ENCODE measurements at regions of chr1 and their contacts with region 1.

Region 1: GRCh38 chr1:89719502-89720306 is 86.8 kb downstream of the LRRC8C start:
- DNase-seq: no peak
- ATAC-seq: peak; percentile 83
- H3K4me3 Mint-ChIP-seq: peak overlapping the region; percentile 63
- H3K27ac Mint-ChIP-seq: peak overlapping the region; percentile 100
- H3K4me1 Mint-ChIP-seq: peaks cover 89% of the 10 kb centered on the region
- H3K27me3 Mint-ChIP-seq: no peaks in the 10 kb centered on the region

Region 2: DNA sequence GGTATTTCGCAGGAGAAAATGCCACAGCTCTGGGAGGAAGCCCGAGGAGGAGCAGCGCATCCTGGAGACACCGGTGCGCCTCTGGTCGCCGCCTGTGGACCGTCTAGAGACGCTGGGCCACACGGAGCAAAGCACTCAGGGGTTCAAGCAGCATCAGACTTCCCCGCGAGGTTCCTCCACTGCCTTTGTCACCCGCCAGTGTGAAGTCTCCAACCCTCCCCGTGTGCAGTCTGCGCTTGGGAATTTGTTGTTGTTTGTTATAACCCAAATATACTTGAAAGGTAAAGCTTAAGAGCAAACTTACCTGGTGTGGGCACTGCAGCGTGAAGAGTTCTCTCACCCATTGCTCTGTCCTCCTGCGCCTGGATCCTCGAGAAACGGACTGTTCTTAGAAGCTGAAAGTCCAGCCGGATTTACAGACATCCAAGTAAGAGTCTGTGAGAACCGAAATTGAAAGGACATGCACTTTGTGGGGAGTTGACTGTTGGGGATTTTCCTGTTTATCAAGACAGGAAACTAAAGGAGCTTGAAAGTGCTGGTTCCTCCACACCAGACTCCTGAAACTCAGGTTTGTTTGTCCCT is 521.1 kb before region 1 on chr1 and contains the start of gene GBP4:
- CTCF ChIA-PET with region 1: no interaction called
- POLR2A ChIA-PET with region 1: no interaction called
- intact Hi-C with region 1: loop called in 1 of 2 experiments (anchors 5 kb)
- DNase-seq: peak; percentile 63
- ATAC-seq: peak; percentile 67
- H3K4me3 Mint-ChIP-seq: peak within 1 kb of the TSS; percentile 83
- H3K27ac Mint-ChIP-seq: peak within 1 kb of the TSS; percentile 98
- H3K4me1 Mint-ChIP-seq: peaks cover 73% of the 10 kb centered on the region
- H3K27me3 Mint-ChIP-seq: no peaks in the 10 kb centered on the region
- total RNA-seq, gene GBP4: 30.8 to 34.4 TPM

Region 3: GRCh38 chr1:89605692-89606091 is 114.0 kb before region 1 on chr1:
- CTCF ChIA-PET with region 1: interaction called, 10 read pairs
- POLR2A ChIA-PET with region 1: interaction called, 22 read pairs
- intact Hi-C with region 1: loop called (anchors 1 kb)
- DNase-seq: no peak
- ATAC-seq: no peak
- H3K4me3 Mint-ChIP-seq: peak overlapping the region; percentile 62
- H3K27ac Mint-ChIP-seq: peak overlapping the region; percentile 99
- H3K4me1 Mint-ChIP-seq: peaks cover 92% of the 10 kb centered on the region
- H3K27me3 Mint-ChIP-seq: no peaks in the 10 kb centered on the region

Region 4: GRCh38 chr1:89657886-89658285 is 61.8 kb before region 1 on chr1:
- CTCF ChIA-PET with region 1: interaction called, 5 read pairs
- POLR2A ChIA-PET with region 1: no interaction called
- intact Hi-C with region 1: loop called (anchors 2 to 5 kb)
- DNase-seq: no peak
- ATAC-seq: peak; percentile 56
- H3K4me3 Mint-ChIP-seq: no peak overlapping the region
- H3K27ac Mint-ChIP-seq: peak overlapping the region; percentile 88
- H3K4me1 Mint-ChIP-seq: peaks cover 94% of the 10 kb centered on the region
- H3K27me3 Mint-ChIP-seq: no peaks in the 10 kb centered on the region

Region 5: GRCh38 chr1:89698624-89699023 is 21.1 kb before region 1 on chr1:
- CTCF ChIA-PET with region 1: interaction called, 19 read pairs
- POLR2A ChIA-PET with region 1: no interaction called
- intact Hi-C with region 1: loop called in 1 of 2 experiments (anchors 2 kb)
- DNase-seq: no peak
- ATAC-seq: no peak
- H3K4me3 Mint-ChIP-seq: peak overlapping the region; percentile 17
- H3K27ac Mint-ChIP-seq: peak overlapping the region; percentile 94
- H3K4me1 Mint-ChIP-seq: peaks cover 89% of the 10 kb centered on the region
- H3K27me3 Mint-ChIP-seq: no peaks in the 10 kb centered on the region

Region 6: DNA sequence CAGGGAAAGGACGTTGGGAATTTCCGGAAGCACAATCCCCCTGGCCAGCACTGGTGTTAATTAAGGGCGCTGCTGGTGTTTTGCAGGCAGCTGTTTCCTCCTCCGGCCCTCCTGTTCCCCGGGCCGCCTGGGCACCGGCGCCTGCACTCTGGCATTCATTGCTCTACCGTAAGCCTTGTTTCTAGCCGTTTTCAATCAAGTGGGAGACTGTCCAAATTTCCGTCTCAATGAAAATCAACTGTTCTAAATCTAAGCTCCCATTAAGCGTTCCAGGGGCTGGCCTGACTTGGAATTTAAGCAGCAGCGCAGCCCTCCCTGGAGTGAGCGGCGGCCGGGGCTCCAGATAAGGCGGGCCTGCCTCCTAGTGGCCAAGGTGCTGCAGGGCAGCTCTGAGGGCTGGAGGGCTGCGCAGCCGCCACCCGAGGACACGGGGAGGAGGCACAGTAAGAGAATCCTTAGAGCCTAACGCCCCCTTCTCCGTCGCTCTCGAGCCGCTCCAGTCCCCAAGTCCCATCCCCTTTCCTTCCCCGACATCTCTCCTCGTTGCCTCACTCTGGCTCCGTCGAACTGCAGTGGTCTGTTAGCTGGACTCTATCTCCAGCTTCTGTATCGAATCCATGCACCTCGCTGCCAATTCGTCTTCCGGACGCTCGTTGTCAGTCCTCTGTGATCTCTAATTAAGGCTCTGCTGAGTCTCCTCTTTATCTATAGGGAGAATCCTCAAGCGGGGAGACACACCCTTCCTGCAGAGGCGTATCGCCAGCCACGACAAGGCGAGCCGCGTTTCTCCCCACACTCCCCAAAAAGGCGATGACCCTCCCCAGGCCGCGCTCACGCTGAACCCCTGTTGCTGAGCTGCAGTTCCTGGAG is 43.3 kb after region 1 on chr1:
- CTCF ChIA-PET with region 1: interaction called, 59 read pairs
- POLR2A ChIA-PET with region 1: interaction called, 8 read pairs
- intact Hi-C with region 1: loop called (anchors 1 kb)
- DNase-seq: peak; percentile 94
- ATAC-seq: peak; percentile 99
- H3K4me3 Mint-ChIP-seq: peak overlapping the region; percentile 68
- H3K27ac Mint-ChIP-seq: peak overlapping the region; percentile 89
- H3K4me1 Mint-ChIP-seq: peaks cover 54% of the 10 kb centered on the region
- H3K27me3 Mint-ChIP-seq: no peaks in the 10 kb centered on the region